Activated CD4-positive, alpha-beta memory T cell treated with anti-CD3 and anti-CD28 coated beads, Interleukin-2, amount 10 ng/mL, durations not matched to agents 7 days and 5 days (primary cell): ENCODE measurements at regions of chr6 and their contacts with region 1.

Region 1: GRCh38 chr6:26285143-26286134 is 79.6 kb upstream of the BTN3A2 start:
- DNase-seq: peak; percentile 98
- H3K4me3 Mint-ChIP-seq: peak overlapping the region; percentile 83
- H3K27ac Mint-ChIP-seq: peak overlapping the region; percentile 96
- H3K4me1 Mint-ChIP-seq: peaks cover 39% of the 10 kb centered on the region
- H3K27me3 Mint-ChIP-seq: peaks cover 4% of the 10 kb centered on the region

Region 2: GRCh38 chr6:26175428-26176181 is 109.8 kb before region 1 on chr6:
- CTCF ChIA-PET with region 1: interaction called, 4 read pairs
- POLR2A ChIA-PET with region 1: interaction called, 23 read pairs
- DNase-seq: peak; percentile 68
- H3K4me3 Mint-ChIP-seq: peak overlapping the region; percentile 5
- H3K27ac Mint-ChIP-seq: peak overlapping the region; percentile 50
- H3K4me1 Mint-ChIP-seq: peaks cover 44% of the 10 kb centered on the region
- H3K27me3 Mint-ChIP-seq: no peaks in the 10 kb centered on the region

Region 3: GRCh38 chr6:26216356-26216885 is 69.0 kb before region 1 on chr6:
- CTCF ChIA-PET with region 1: interaction called, 3 read pairs
- POLR2A ChIA-PET with region 1: interaction called, 86 read pairs
- DNase-seq: peak; percentile 90
- H3K4me3 Mint-ChIP-seq: no peak overlapping the region
- H3K27ac Mint-ChIP-seq: no peak overlapping the region
- H3K4me1 Mint-ChIP-seq: peaks cover 28% of the 10 kb centered on the region
- H3K27me3 Mint-ChIP-seq: no peaks in the 10 kb centered on the region

Region 4: DNA sequence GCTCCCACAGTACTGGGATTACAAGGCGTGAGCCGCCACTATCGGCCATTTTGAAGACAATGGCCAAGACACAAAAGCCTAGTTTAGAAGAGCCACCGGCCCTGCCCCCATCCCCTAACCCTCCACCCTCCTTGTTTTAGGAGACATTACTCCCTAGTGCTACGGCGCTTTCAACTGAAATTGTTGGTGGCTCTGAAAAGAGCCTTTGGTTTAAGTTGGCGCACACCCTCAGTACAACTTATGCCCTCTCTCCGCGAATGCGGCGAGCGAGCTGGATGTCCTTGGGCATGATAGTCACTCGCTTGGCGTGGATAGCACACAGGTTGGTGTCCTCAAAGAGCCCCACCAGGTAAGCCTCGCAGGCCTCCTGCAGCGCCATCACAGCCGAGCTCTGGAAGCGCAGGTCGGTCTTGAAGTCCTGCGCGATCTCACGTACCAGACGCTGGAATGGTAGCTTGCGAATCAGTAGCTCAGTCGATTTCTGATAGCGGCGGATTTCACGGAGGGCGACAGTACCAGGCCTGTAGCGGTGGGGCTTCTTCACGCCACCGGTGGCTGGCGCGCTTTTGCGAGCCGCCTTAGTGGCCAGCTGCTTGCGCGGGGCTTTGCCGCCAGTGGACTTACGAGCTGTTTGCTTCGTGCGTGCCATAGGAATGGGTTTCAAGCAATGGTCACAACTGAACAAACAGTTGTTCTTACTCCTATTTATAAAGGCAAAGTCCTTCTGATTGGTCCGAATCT is 35.3 kb before region 1 on chr6:
- CTCF ChIA-PET with region 1: interaction called, 17 read pairs
- POLR2A ChIA-PET with region 1: interaction called, 7 read pairs
- DNase-seq: peak; percentile 84
- H3K4me3 Mint-ChIP-seq: peak overlapping the region; percentile 90
- H3K27ac Mint-ChIP-seq: peak overlapping the region; percentile 93
- H3K4me1 Mint-ChIP-seq: peaks cover 42% of the 10 kb centered on the region
- H3K27me3 Mint-ChIP-seq: no peaks in the 10 kb centered on the region

Region 5: DNA sequence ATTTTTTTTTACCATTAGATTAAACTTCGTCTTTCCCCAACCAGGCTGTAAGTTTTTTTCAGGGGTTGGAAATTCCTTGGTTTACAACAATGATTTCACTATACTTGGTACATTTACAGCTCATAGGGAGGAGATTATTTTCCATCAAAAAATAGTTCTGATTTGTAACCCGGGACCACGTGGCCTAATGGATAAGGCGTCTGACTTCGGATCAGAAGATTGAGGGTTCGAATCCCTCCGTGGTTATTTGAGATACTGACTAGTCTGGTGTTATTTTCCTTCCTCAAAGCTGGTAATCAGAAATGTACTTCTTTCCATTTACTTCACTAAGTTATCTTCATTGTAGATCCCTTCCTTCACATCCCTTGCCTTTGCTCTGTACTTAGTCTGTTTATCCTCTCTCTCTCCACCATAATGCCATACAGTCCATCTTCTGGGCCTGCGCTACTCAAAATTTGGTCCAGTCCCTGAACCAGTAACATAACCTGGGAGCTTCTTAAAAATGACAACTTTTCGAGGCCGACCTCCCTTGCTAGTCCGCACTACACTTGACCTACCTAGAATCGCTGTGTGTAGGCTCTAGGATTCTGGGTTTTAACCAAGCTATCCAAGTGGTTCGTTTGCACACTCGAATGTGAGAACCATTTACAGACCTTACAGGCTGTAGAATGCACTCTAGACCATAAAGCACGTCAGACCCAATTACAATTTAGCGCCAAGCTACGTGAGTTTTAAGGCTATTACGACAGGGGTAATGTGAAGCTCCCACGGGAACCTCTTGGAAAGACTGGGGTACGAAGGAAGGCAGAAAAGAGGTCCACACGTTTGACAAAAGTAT is 37.4 kb after region 1 on chr6:
- CTCF ChIA-PET with region 1: interaction called, 7 read pairs
- POLR2A ChIA-PET with region 1: interaction called, 30 read pairs
- DNase-seq: peak; percentile 54
- H3K4me3 Mint-ChIP-seq: peak overlapping the region; percentile 81
- H3K27ac Mint-ChIP-seq: peak overlapping the region; percentile 70
- H3K4me1 Mint-ChIP-seq: peaks cover 38% of the 10 kb centered on the region
- H3K27me3 Mint-ChIP-seq: peaks cover 25% of the 10 kb centered on the region

Region 6: GRCh38 chr6:27146706-27147505 is 861.5 kb after region 1 on chr6:
- CTCF ChIA-PET with region 1: no interaction called
- POLR2A ChIA-PET with region 1: interaction called, 23 read pairs
- DNase-seq: peak; percentile 87
- H3K4me3 Mint-ChIP-seq: no peak overlapping the region
- H3K27ac Mint-ChIP-seq: no peak overlapping the region
- H3K4me1 Mint-ChIP-seq: peaks cover 31% of the 10 kb centered on the region
- H3K27me3 Mint-ChIP-seq: no peaks in the 10 kb centered on the region